Activated CD8-positive, alpha-beta T cell treated with anti-CD3 and anti-CD28 coated beads, Interleukin-2, amount 10 ng/mL, durations not matched to agents 7 days and 5 days (primary cell): ENCODE measurements at regions of chr17 and their contacts with region 1.

Region 1: DNA sequence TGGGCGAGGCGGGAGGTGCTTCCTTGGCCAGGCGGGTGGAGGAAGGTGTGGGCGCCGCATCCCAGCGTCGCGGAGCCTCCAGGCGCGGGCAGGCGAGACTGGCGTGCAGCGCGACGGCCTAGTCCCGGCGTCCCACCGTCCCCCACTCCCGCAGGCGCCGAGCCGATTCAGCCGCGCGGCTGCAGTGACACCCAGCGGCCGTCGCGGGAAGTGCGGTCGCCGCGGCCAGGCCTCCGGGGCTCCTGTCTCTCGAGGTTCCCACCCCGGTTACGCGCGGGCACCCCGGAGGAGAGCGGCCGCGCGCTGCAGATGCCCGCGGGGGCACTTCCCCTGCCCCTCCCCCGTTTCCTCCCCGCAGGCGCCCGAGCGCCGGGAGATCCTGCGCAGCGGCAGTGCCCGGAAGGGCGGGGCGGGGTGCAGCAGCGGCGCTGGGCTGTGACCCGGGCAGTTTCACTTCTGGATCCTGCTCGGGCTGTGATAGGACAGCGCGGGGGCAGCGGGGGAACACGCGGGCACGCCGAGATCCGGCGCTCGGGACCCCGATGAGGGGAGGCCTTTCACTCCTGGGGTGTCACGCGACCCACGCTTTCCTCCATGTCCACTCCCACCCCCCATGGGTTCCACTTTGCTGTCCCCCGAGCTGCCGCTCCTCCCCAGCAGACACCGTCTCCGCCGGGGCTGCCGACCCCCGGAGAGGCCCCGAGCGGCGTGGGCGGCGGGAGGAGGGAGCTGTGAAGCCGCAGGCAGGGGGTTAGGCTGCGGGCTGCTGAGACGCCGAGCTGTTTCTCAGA is 16.6 kb downstream of the GRB7 start:
- DNase-seq: peak; percentile 97
- ATAC-seq: peak; percentile 85
- H3K4me3 Mint-ChIP-seq: peak overlapping the region; percentile 79
- H3K27ac Mint-ChIP-seq: peak overlapping the region; percentile 83
- H3K4me1 Mint-ChIP-seq: peaks cover 63% of the 10 kb centered on the region
- H3K27me3 Mint-ChIP-seq: no peaks in the 10 kb centered on the region

Region 2: GRCh38 chr17:39636927-39637736 is 117.2 kb before region 1 on chr17 and contains the start of gene STARD3:
- CTCF ChIA-PET with region 1: interaction called, 10 read pairs
- POLR2A ChIA-PET with region 1: interaction called, 3 read pairs
- DNase-seq: peak; percentile 94
- ATAC-seq: peak; percentile 90
- H3K4me3 Mint-ChIP-seq: peak within 1 kb of the TSS; percentile 92
- H3K27ac Mint-ChIP-seq: peak within 1 kb of the TSS; percentile 81
- H3K4me1 Mint-ChIP-seq: peaks cover 68% of the 10 kb centered on the region
- H3K27me3 Mint-ChIP-seq: no peaks in the 10 kb centered on the region
- total RNA-seq, gene STARD3: 69.0 to 72.1 TPM

Region 3: GRCh38 chr17:39719563-39720355 is 34.6 kb before region 1 on chr17:
- CTCF ChIA-PET with region 1: no interaction called
- POLR2A ChIA-PET with region 1: no interaction called
- DNase-seq: no peak
- ATAC-seq: no peak
- H3K4me3 Mint-ChIP-seq: no peak overlapping the region
- H3K27ac Mint-ChIP-seq: no peak overlapping the region
- H3K4me1 Mint-ChIP-seq: no peaks in the 10 kb centered on the region
- H3K27me3 Mint-ChIP-seq: no peaks in the 10 kb centered on the region

Region 4: DNA sequence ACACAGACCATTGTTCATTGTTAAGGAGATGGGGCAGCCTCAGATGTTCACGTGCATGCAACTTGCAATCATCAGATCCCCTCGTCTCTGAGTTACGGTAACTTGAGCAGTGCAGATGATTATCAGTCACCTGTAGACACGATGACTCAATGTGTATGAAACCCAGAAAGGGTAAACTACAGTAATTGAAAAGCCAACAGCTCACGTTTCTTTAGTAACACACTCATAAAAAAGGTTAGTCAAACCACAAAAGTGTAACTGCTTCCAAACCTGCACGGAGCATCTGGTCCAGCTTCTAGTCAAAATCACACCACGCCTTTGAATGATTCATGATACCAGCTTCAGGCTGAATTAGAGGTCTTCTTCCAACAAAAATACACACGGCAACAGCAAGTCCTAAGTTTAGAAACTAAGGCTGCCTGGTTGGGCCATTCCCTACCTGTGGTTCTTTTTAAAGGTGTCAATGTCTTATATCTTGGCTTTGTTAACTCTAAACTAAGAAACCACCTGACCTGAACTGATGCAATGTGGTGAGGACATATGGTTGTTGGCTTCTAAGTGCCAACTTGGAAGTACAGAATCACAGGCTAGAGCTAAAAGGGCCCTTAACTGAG is 15.7 kb after region 1 on chr17:
- CTCF ChIA-PET with region 1: interaction called, 12 read pairs
- POLR2A ChIA-PET with region 1: interaction called, 22 read pairs
- DNase-seq: peak; percentile 60
- ATAC-seq: peak; percentile 86
- H3K4me3 Mint-ChIP-seq: peak overlapping the region; percentile 17
- H3K27ac Mint-ChIP-seq: peak overlapping the region; percentile 82
- H3K4me1 Mint-ChIP-seq: peaks cover 92% of the 10 kb centered on the region
- H3K27me3 Mint-ChIP-seq: no peaks in the 10 kb centered on the region

Region 5: DNA sequence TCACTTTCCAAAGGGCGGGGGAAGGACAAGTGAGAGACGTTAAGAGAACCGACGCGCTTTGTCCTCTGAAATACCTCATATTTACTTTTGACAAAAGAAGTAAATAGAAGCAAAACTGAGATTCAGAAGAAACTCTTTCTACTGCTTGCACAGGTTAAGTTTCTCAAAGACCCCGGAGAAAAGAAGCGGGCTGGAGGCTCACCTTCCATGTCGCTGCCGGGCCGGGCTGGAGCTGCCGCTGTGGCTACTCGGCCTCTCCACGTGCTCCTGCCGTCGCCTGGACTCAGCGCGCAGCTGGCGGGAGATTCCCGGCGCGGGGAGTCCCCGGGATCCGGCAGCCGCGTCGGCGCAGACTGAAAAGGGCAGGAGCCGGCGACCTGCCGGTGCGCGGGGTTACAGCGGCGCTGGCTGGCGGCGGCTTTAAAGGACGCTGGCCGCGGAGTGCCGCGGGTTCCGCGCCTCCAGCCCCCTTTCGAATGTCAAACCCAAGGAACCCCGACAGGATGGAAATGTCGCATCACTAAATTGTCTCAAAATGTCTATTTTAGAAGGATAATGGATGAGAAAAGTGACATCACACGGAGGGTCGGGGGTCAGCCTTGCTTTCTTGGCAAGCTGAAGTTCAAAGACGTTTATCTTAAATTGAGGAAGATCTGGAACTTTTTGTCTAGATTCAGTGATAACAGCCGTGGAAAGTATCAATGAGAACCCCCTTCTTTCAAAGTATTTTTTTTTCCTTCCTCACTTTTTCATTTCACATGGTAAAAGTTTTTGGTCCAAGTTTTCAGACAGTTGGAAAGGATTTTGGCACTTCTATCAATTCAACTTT is 109.8 kb after region 1 on chr17 and contains the start of gene IKZF3:
- CTCF ChIA-PET with region 1: interaction called, 16 read pairs
- POLR2A ChIA-PET with region 1: interaction called, 42 read pairs
- DNase-seq: peak; percentile 75
- ATAC-seq: peak; percentile 74
- H3K4me3 Mint-ChIP-seq: peak within 1 kb of the TSS; percentile 84
- H3K27ac Mint-ChIP-seq: peak within 1 kb of the TSS; percentile 89
- H3K4me1 Mint-ChIP-seq: peaks cover 60% of the 10 kb centered on the region
- H3K27me3 Mint-ChIP-seq: no peaks in the 10 kb centered on the region
- total RNA-seq, gene IKZF3: 31.1 to 31.9 TPM